Transverse colon (tissue), 4 donors: ENCODE measurements at regions of chr11 and their contacts with region 1.

Region 1: GRCh38 chr11:46176402-46176801 is 55.1 kb upstream of the PHF21A start:
- DNase-seq: peak; percentile 33
- H3K4me3 ChIP-seq: no peak overlapping the region
- H3K27ac ChIP-seq: no peak overlapping the region
- H3K4me1 ChIP-seq: peaks cover 0 to 3% (median 0%) of the 10 kb centered on the region in 4 donors
- H3K27me3 ChIP-seq: no peaks in the 10 kb centered on the region
- CTCF ChIP-seq: no peak
- EP300 ChIP-seq: no peak
- POLR2A ChIP-seq: no peak

Region 2: DNA sequence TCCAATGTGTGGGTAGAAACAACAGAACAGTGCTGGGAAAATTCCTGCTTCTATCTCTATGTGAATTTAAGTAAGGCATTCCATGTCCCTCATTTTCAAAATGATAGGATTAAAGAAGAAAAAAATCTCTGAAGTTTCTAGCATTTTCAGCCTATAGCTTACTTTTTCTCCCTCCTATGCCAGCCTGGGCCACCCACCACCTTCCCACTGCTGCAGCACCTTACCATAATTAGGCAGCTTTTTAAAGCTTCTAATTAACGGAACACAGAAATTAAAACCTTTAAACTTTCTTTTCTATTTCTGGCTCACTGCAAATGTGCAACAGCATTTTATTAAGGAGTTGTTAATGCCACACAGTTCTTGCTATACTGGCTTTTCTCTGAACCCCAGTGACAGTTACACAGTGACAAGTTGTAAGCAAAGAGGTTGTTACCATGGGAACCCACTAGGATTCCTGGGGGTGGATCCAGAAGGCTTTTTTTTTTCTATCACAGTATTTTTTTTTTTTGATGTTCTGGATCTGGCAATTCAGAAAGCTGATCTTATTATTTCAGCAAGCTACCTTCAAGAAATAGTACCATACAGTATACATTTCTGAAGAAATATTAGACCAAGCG is 1356.3 kb after region 1 on chr11:
- in situ Hi-C with region 1: no loop called
- intact Hi-C with region 1: loop called (anchors 5 kb)
- DNase-seq: no peak
- H3K4me3 ChIP-seq: no peak overlapping the region
- H3K27ac ChIP-seq: peak overlapping the region in 3 of 4 donors; percentile 33 to 55 (median 40)
- H3K4me1 ChIP-seq: peaks cover 14 to 54% (median 18%) of the 10 kb centered on the region in 4 donors
- H3K27me3 ChIP-seq: no peaks in the 10 kb centered on the region
- CTCF ChIP-seq: no peak
- EP300 ChIP-seq: no peak
- POLR2A ChIP-seq: no peak